ENCODE measurements at regions of chr10 and their contacts with region 1.

Region 1: DNA sequence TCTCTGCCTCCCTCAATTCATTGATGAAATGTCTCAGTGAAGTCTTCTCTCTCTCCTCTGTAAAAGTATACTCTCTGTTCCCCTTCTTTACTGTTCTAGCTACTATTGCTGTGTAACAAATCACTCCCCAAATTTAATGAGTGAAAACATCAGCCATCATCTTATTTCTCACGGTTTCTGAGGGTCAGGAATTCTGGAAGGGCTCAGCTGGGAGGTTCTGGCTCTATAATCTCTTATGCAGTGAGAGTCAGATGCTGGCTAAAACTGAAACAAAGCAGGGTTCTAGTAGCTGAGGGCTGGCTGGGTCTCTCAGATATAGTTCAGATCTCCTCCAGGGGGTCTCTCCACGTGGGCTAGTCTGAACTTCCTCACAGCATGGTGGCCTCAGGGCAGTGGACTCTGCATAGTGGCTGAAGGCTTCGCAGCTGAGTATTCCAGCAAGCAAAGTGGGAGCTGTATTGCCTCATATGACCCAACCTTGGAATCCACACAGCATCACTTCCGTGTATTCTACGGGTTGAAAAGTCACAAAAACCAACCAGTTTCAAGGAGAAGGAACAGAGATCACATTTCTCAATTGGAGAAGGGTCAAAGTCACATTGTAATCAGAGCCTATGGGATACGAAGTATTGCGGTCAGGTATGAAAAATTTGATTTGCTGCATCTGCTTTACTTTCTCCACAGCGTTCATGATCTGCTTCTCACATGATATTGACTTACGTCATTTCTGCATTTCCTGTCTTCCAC is 74.8 kb upstream of the ATRNL1 start:
- DNase-seq: no peak
- ATAC-seq: no peak
- H3K4me3 ChIP-seq: no peak overlapping the region
- H3K27ac ChIP-seq: no peak overlapping the region
- H3K4me1 ChIP-seq: no peaks in the 10 kb centered on the region
- H3K27me3 ChIP-seq: no peaks in the 10 kb centered on the region
- CTCF ChIP-seq: no peak

Region 2: GRCh38 chr10:113859261-113859660 is 1159.1 kb before region 1 on chr10:
- CTCF ChIA-PET with region 1: no interaction called
- POLR2A ChIA-PET with region 1: interaction called, 11 read pairs
- in situ Hi-C with region 1: no loop called
- intact Hi-C with region 1: no loop called
- DNase-seq: no peak
- ATAC-seq: no peak
- H3K4me3 ChIP-seq: no peak overlapping the region
- H3K27ac ChIP-seq: no peak overlapping the region
- H3K4me1 ChIP-seq: peaks cover 16% of the 10 kb centered on the region; the same call in 1 of the 2 replicates
- H3K27me3 ChIP-seq: no peaks in the 10 kb centered on the region
- CTCF ChIP-seq: no peak

Region 3: GRCh38 chr10:115141254-115141653 is 122.9 kb after region 1 on chr10:
- CTCF ChIA-PET with region 1: no interaction called
- POLR2A ChIA-PET with region 1: interaction called, 10 read pairs
- in situ Hi-C with region 1: no loop called
- intact Hi-C with region 1: no loop called
- DNase-seq: no peak
- ATAC-seq: no peak
- H3K4me3 ChIP-seq: no peak overlapping the region
- H3K27ac ChIP-seq: no peak overlapping the region
- H3K4me1 ChIP-seq: no peaks in the 10 kb centered on the region
- H3K27me3 ChIP-seq: no peaks in the 10 kb centered on the region
- CTCF ChIP-seq: peak; percentile 60; the same call in 1 of the 2 replicates

Measured in Panc1 (cell line).